Head of caudate nucleus (tissue), 42 donors: ENCODE measurements at regions of chr13 and their contacts with region 1.

Region 1: GRCh38 chr13:107864543-107865317 is 350.6 kb downstream of the LIG4 start:
- DNase-seq: peak in 9 of 42 donors; percentile 9 to 32 (median 17)

Region 2: DNA sequence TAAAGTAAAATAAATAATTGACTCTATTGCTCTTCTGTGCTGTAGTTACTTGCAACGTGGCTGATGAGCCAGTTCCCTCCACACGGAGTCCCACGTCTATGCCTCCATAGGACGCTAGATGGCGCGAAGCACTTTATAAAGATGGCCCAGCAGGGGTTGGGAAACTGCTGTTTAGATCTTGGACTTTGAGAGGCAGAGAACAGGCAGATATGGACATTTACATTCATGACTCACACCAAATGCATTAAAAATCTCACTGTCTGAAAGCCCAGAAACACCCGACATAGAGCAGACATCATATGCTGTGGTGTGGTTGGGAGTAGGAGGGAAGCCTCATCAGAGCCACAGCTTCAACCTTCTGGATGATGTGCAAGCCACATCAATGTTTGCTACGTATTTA is 653.7 kb before region 1 on chr13:
- intact Hi-C with region 1: loop called (anchors 5 kb)
- DNase-seq: peak; percentile 60 to 93 (median 85)

Region 3: DNA sequence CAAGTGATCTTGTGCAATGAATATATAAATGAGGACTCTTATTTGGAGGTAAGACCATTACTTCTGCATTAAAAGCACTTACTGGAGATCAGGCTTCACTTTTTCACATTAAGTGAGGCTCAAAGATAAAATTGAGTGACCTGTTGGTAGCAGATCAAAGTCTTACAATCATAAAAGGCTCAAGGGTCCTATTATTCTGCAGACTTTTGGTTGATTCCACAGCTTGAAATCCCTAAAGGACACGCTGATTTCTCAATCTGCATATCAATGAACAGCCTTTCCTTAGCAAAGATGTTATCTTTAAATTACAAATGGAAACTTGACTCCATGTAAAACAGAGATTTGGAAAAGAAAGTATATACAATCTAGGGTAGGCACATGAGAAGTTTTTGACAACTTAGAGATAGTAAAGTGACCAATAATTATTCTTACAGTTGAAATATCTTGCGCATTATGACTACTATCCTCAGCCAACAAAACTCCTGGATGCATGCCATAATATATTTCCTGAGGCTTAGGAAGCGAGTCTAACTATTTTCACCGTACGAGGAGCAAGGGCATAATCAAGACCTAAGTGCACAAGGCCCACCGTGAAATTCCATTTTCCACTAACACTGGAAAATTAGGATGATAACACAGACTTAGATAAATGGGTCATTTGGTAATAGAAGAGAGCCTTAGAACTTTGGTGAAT is 290.1 kb before region 1 on chr13:
- intact Hi-C with region 1: no loop called
- DNase-seq: no peak

Region 4: GRCh38 chr13:107743983-107744382 is 120.7 kb before region 1 on chr13:
- intact Hi-C with region 1: no loop called
- DNase-seq: no peak

Region 5: DNA sequence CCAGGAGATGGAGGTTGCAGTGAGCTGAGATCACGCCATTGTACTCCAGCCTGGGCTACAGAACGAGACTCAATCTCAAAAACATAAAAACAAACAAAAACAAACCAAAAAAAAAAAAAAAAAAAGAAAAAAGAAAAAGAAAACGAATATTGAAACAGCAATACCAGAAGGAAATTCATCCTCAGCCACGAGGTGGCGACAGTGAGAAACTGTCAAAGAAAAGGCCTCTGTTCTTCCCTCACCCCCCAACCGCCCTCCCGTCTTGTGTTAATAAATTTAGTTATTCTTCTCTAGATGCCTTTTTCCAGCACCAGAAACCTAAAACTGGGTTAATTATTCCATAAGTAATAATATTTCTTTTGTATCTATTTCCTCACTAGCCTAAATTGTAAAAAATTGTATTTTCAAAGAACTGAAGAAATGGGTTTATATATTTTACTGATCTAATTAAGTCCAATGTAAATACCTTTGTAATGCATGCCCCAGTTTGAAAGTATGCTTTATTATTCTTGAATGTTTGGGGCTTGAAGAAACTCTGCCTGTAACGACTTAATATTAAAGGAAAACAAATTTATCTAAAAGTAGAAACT is 312.1 kb after region 1 on chr13:
- intact Hi-C with region 1: no loop called
- DNase-seq: peak in 39 of 42 donors; percentile 4 to 83 (median 52)